Dorsolateral prefrontal cortex (tissue), 120 donors: ENCODE measurements at regions of chr1 and their contacts with region 1.

Region 1: DNA sequence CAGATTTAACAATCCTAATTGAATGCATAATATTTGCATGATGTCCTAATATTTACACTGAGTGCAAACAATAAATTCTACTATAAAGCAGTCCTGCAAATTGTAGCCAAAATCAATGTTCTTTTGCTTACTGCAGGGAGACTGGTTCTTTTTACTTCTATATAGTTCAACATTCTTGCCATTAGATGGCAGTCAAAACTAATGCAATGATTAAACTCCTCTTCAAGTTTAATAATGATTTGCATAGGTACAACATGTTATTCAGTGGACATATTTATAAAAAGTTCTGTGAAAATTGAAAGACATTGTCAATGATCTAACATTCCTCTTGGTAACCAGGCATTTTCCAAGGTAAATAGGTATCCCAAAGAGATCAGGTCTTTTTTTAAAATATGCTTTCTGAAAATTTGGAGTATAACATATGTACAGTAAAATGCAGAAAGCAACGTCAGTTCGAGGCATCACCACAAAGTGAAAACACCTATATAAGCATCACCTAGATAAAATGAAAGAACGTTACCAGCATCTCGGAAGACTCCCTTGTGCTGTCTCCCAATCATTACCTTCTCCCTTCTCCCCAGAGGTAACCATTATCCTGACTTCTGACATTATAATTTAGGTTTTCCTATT is 9.8 kb upstream of the FNBP1L start:
- DNase-seq: no peak
- H3K4me3 ChIP-seq: no peak overlapping the region
- H3K27ac ChIP-seq: no peak overlapping the region
- H3K27me3 ChIP-seq: peaks cover 0 to 7% (median 0%) of the 10 kb centered on the region in 45 donors
- CTCF ChIP-seq: peak; percentile 48 to 89 (median 70)

Region 2: DNA sequence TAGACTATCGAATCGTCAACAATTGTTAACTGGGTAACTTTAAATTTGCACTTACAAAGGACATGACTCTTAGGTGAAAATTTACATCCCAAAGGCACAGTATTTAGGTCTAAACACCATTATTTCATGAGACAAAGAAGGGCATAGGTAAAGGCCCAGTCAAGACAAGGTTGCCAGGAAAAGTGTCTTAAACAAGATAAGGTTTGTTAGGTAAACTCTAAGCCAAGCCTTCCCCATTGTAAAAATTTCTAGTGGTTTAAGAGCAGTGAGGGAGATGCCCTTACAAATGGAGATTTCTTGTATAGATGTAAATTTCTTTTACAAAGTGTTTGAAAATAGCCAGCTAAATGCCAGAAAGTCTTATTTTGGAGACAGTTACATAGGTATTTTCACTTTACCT is 27.1 kb before region 1 on chr1:
- intact Hi-C with region 1: no loop called
- DNase-seq: no peak
- H3K4me3 ChIP-seq: no peak overlapping the region
- H3K27ac ChIP-seq: no peak overlapping the region
- H3K27me3 ChIP-seq: no peaks in the 10 kb centered on the region
- CTCF ChIP-seq: no peak

Region 3: GRCh38 chr1:93629099-93630059 is 191.3 kb after region 1 on chr1:
- intact Hi-C with region 1: loop called in 1 of 2 experiments (anchors 5 kb)
- DNase-seq: peak in 1 of 10 donors; percentile 38
- H3K4me3 ChIP-seq: no peak overlapping the region
- H3K27ac ChIP-seq: peak overlapping the region in 4 of 59 donors; percentile 0 to 15 (median 4)
- H3K27me3 ChIP-seq: peaks cover 0 to 4% (median 0%) of the 10 kb centered on the region in 45 donors
- CTCF ChIP-seq: peak; percentile 75 to 98 (median 88)